CD14-positive monocyte (primary cell): ENCODE measurements at regions of chr14 and their contacts with region 1.

Region 1: GRCh38 chr14:60656686-60657455 is 7.6 kb upstream of the SIX1 start:
- DNase-seq: peak; percentile 5 to 33 (median 17)
- H3K4me3 ChIP-seq: peak overlapping the region; percentile 42 to 82 (median 61)
- H3K4me3 Mint-ChIP-seq: peak overlapping the region; percentile 90 to 97
- H3K27ac ChIP-seq: no peak overlapping the region
- H3K27ac Mint-ChIP-seq: peak overlapping the region in 1 of 7 donors; percentile 48
- H3K4me1 ChIP-seq: peaks cover 23 to 25% of the 10 kb centered on the region in 2 donors
- H3K4me1 Mint-ChIP-seq: peaks cover 49% of the 10 kb centered on the region
- H3K27me3 ChIP-seq: peaks cover 75 to 90% of the 10 kb centered on the region in 2 donors
- H3K27me3 Mint-ChIP-seq: peaks cover 88 to 91% (median 88%) of the 10 kb centered on the region in 3 donors
- CTCF ChIP-seq: peak; percentile 35

Region 2: GRCh38 chr14:60514741-60515491 is 142.0 kb before region 1 on chr14:
- intact Hi-C with region 1: no loop called
- DNase-seq: no peak
- H3K4me3 ChIP-seq: peak overlapping the region in 1 of 3 experiments; percentile 39
- H3K4me3 Mint-ChIP-seq: peak overlapping the region in 1 of 2 donors; percentile 79
- H3K27ac ChIP-seq: no peak overlapping the region
- H3K27ac Mint-ChIP-seq: no peak overlapping the region
- H3K4me1 ChIP-seq: peaks cover 3 to 15% of the 10 kb centered on the region in 2 donors
- H3K4me1 Mint-ChIP-seq: peaks cover 19% of the 10 kb centered on the region
- H3K27me3 ChIP-seq: peaks cover 88 to 94% of the 10 kb centered on the region in 2 donors
- H3K27me3 Mint-ChIP-seq: peaks cover 82 to 93% (median 92%) of the 10 kb centered on the region in 3 donors
- CTCF ChIP-seq: peak; percentile 37

Region 3: DNA sequence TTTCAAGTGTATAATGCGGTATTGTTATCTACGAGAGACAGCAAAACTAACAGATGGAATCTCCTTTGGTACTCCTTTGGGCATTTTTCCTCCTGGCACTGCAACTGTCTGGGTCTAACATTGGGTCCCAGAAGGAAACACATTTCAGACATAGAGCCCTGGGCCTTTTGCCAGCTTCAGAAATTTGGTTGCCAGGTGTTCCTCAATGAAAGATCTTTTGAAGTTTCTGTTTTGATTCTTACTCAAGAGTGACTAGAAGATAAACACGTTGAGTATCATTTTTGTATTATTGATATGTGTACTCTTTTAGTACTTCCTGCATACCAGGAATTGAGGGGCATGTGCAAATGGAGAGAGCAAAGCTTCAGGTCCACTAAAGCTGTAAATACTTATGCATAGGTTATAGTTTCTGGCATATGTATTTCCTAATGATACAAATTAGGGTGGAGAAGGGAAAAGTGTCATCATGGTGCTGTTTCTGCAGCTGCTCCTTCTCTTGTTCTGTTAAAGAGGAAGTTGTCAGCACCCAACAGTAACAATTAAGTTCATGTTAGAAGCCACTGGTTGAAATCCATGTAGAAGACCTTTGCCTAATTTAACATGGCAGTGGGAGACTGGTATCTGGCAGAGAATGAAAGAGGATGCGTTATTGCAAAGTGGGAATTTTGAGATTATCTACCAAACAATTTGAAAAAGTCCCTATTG is 377.7 kb after region 1 on chr14:
- intact Hi-C with region 1: loop called in 1 of 2 experiments (anchors 10 kb)
- DNase-seq: peak in 2 of 3 donors; percentile 7 to 22
- H3K4me3 ChIP-seq: no peak overlapping the region
- H3K4me3 Mint-ChIP-seq: no peak overlapping the region
- H3K27ac ChIP-seq: peak overlapping the region in 1 of 2 donors; percentile 43
- H3K27ac Mint-ChIP-seq: peak overlapping the region in 2 of 7 donors; percentile 5 to 10
- H3K4me1 ChIP-seq: peaks cover 9 to 11% of the 10 kb centered on the region in 2 donors
- H3K4me1 Mint-ChIP-seq: peaks cover 11% of the 10 kb centered on the region
- H3K27me3 ChIP-seq: no peaks in the 10 kb centered on the region
- H3K27me3 Mint-ChIP-seq: no peaks in the 10 kb centered on the region
- CTCF ChIP-seq: no peak